Sigmoid colon (tissue), 7 donors: ENCODE measurements at regions of chr13 and their contacts with region 1.

Region 1: DNA sequence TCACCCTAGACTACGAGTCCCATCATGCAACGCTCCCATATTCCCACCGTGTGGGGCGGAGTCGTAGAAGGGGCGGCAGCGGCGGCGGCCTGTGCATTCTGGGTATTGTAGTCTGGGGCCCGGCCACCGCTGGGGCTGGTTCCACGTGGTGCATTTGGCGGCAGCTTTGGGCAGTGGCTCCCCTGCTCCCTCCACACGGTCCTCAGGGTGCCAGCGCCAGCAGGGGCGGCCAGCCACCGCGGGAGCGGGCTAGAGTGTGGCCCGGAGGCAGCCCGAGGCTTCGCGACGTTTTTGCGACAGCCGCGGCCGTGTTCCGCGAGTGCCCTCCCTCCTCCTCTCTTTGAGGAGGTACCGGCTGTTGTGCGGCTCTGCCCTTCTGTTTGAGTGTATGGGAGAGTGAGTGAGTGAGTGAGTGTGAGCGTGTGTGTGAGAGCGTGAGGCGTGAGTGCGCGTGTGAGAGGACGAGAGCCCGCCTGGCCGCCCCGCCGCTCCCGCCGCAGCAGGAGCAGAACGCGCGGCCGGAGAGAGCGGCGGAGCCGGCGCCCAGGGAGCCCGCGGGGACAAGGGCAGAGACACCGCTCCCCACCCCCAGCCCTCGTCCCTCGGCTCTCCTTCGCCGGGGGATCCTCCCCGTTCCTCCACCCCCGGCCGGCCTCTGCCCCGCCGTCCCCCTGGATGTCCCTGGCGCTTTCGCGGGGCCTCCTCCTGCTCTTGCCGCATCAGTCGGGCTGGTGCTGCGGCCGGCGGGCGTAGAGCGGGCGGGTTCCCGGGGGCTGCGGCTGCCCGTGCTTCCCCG is at the start of gene CDK8:
- DNase-seq: peak; percentile 93
- H3K4me3 ChIP-seq: peak within 1 kb of the TSS; percentile 86 to 97 (median 94)
- H3K27ac ChIP-seq: peak within 1 kb of the TSS; percentile 93 to 98 (median 95)
- H3K4me1 ChIP-seq: peaks cover 0 to 35% (median 17%) of the 10 kb centered on the region in 4 donors
- H3K27me3 ChIP-seq: no peaks in the 10 kb centered on the region
- CTCF ChIP-seq: no peak
- EP300 ChIP-seq: no peak
- POLR2A ChIP-seq: peak; percentile 77
- total RNA-seq, gene CDK8: 42.3 to 78.6 (median 46.6) TPM

Region 2: GRCh38 chr13:25114220-25114619 is 1139.8 kb before region 1 on chr13:
- intact Hi-C with region 1: no loop called
- DNase-seq: peak; percentile 75
- H3K4me3 ChIP-seq: no peak overlapping the region
- H3K27ac ChIP-seq: no peak overlapping the region
- H3K4me1 ChIP-seq: no peaks in the 10 kb centered on the region
- H3K27me3 ChIP-seq: peaks cover 0 to 4% (median 0%) of the 10 kb centered on the region in 3 donors
- CTCF ChIP-seq: peak in 3 of 4 experiments; percentile 42 to 69 (median 50)
- EP300 ChIP-seq: no peak
- POLR2A ChIP-seq: no peak

Region 3: DNA sequence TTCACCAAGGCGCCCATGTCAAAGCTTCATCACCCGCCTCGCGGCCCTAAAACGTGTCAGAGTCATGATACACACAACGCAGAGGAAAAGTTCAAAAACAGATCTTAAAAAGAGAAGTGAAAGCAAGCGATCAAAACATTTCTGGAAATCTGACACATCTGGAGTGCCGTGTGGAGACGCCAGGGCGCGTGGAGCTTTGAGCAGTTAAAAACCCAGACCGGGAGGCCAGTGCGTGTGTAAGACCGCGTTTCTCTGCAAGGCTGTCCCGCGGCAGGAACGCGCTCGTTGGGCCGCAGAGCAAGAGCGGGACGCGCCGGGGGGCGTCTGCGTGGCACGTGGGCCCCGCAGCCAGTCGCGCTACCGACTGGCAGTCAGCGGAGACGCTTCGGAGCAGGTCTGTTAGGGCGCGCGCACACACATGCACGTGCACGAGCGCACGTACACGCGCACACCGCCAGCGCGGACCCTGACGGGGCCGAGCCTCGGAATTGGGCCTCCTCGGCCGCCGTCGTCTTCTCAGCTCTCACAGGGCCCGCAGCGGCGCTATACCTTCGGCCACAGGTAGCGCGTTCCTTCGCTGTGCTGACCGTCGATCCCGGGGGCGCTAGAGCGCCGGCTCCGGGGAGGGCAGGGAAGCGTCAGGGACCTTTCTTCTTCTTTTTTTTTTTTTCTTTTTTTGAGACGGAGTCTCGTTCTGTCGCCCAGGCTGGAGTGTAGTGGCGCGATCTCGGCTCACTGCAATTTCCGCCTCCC is 67.7 kb before region 1 on chr13:
- intact Hi-C with region 1: loop called (anchors 5 kb)
- DNase-seq: peak; percentile 92
- H3K4me3 ChIP-seq: peak overlapping the region; percentile 43 to 76 (median 60)
- H3K27ac ChIP-seq: peak overlapping the region; percentile 77 to 87 (median 78)
- H3K4me1 ChIP-seq: peaks cover 0 to 11% (median 8%) of the 10 kb centered on the region in 4 donors
- H3K27me3 ChIP-seq: no peaks in the 10 kb centered on the region
- CTCF ChIP-seq: peak in 2 of 4 experiments; percentile 9 to 27
- EP300 ChIP-seq: no peak
- POLR2A ChIP-seq: no peak

Region 4: DNA sequence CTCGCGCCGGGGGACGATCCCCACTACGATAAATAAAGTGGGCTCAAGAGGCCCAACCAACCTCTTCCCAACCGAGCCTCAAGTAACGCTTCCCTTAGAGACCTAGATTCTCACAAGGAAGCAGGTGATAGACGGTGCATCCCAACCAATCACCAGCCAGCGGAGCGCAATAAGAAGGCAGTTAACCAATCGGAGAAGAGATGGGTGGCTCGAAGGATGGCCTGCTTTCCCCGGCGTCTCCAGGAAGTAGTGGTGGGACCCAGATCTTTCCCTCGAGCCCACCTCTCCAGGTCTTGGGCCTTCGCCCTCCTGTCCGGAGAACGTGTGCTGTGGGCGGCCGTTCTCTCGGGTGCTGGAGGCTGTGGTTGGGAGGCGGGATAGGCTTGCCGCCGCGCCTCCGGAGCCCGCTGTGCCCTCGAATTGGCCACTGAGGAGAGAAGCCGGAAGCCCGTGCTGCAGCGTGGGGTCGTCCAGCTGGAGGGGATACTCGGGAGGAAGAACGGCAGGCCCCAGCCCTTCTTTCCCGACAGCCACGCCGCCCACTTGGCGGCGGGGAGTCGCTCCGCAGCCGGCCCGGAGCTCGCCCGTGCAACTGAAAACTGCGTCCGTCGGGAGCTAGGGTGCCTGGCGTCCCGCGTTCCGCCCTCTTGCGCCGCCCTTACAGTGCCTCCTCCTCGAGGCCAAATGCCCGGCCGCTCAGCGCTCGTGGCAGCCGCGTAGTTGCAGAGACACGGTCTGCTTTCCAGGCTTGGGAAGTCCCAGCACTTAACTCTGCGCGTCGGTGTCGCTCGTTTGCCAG is 32.1 kb before region 1 on chr13 and contains the start of gene RNF6:
- intact Hi-C with region 1: loop called (anchors 2 kb)
- DNase-seq: peak; percentile 98
- H3K4me3 ChIP-seq: peak within 1 kb of the TSS; percentile 79 to 96 (median 92)
- H3K27ac ChIP-seq: peak within 1 kb of the TSS; percentile 95 to 98 (median 96)
- H3K4me1 ChIP-seq: peaks cover 0 to 26% (median 21%) of the 10 kb centered on the region in 4 donors
- H3K27me3 ChIP-seq: no peaks in the 10 kb centered on the region
- CTCF ChIP-seq: peak in 1 of 4 experiments; percentile 35
- EP300 ChIP-seq: no peak
- POLR2A ChIP-seq: peak in 1 of 2 donors; percentile 29
- total RNA-seq, gene RNF6: 11.9 to 27.1 (median 22.5) TPM

Region 5: GRCh38 chr13:26325876-26326275 is 71.9 kb after region 1 on chr13:
- intact Hi-C with region 1: loop called (anchors 5 kb)
- DNase-seq: no peak
- H3K4me3 ChIP-seq: no peak overlapping the region
- H3K27ac ChIP-seq: peak overlapping the region in 3 of 4 donors; percentile 47 to 76 (median 69)
- H3K4me1 ChIP-seq: peaks cover 0 to 70% (median 42%) of the 10 kb centered on the region in 4 donors
- H3K27me3 ChIP-seq: no peaks in the 10 kb centered on the region
- CTCF ChIP-seq: no peak
- EP300 ChIP-seq: no peak
- POLR2A ChIP-seq: no peak

Region 6: DNA sequence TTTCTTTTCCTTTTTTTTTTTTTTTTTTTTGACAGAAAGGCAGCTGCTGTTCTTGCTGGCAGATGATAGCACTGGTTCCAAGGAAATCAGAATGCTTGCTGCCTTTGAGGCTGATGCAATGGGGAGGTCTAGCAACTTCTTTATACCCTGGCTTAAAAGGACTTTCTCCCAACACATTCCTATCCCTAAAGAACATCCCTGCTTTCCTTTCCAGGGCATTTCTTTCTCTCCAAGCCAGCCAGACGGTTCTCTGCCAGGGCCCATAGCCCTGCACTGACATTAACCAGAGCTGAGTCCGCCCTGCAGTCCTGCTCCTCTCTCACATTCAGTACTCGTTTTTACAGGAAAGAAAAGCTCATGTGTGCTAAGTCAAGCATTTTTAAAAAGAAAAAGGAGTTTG is 169.6 kb after region 1 on chr13:
- intact Hi-C with region 1: loop called (anchors 1 kb)
- DNase-seq: peak; percentile 92
- H3K4me3 ChIP-seq: peak overlapping the region in 3 of 4 donors; percentile 3 to 20 (median 3)
- H3K27ac ChIP-seq: peak overlapping the region; percentile 85 to 92 (median 88)
- H3K4me1 ChIP-seq: peaks cover 0 to 77% (median 62%) of the 10 kb centered on the region in 4 donors
- H3K27me3 ChIP-seq: no peaks in the 10 kb centered on the region
- CTCF ChIP-seq: no peak
- EP300 ChIP-seq: peak; percentile 43 to 90 (median 66)
- POLR2A ChIP-seq: no peak

Region 7: GRCh38 chr13:26442541-26442940 is 188.6 kb after region 1 on chr13:
- intact Hi-C with region 1: loop called (anchors 5 kb)
- DNase-seq: no peak
- H3K4me3 ChIP-seq: no peak overlapping the region
- H3K27ac ChIP-seq: peak overlapping the region; percentile 69 to 87 (median 81)
- H3K4me1 ChIP-seq: peaks cover 0 to 42% (median 32%) of the 10 kb centered on the region in 4 donors
- H3K27me3 ChIP-seq: no peaks in the 10 kb centered on the region
- CTCF ChIP-seq: no peak
- EP300 ChIP-seq: peak in 1 of 4 donors; percentile 20
- POLR2A ChIP-seq: no peak

Region 8: DNA sequence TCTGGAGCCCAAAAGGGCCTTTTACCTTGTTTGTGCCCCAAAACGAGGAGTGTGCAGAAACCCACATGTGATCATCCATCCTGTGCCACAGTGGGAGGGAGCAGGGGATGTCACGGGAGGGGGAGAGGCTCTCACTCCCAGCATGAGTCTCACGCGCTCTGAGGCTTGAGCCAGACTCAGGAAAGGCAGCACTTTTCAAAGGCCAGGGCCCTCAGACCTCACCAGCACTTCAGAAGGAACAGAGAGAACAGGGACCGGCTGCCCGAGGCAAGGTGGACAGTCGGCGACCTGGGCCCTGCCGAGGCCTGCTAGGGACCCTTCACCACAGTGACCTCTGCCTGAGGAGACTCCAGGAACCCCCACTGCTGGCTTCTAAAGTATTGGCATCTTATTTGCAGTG is 231.8 kb after region 1 on chr13:
- intact Hi-C with region 1: loop called (anchors 5 kb)
- DNase-seq: peak; percentile 80
- H3K4me3 ChIP-seq: no peak overlapping the region
- H3K27ac ChIP-seq: peak overlapping the region; percentile 46 to 84 (median 74)
- H3K4me1 ChIP-seq: peaks cover 0 to 32% (median 26%) of the 10 kb centered on the region in 4 donors
- H3K27me3 ChIP-seq: no peaks in the 10 kb centered on the region
- CTCF ChIP-seq: no peak
- EP300 ChIP-seq: no peak
- POLR2A ChIP-seq: no peak

Region 9: DNA sequence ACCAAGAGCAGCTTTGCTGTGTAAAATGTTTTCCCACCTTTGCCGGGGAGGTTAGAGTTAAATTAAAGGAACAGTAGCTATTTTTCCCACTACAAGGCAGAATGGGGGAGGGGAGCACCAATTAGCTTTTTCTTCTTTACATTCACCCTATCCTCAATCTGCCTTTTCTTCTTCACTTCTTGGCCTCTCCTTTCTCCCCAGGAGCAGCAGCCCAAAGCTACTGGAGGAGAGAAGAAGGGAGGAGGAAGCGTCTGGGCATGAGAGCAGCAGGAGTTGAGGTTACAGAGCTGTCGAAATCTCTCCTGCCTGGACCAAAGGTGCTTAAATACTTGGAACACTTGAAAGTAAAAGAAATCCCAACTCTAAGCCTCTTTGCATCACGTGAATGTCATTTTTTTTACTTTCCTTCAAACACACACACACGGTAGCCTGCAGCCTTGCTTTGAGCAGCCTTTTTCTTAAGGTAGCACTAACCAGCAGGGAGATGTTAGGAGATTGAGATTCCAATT is 264.5 kb after region 1 on chr13:
- intact Hi-C with region 1: no loop called
- DNase-seq: no peak
- H3K4me3 ChIP-seq: no peak overlapping the region
- H3K27ac ChIP-seq: no peak overlapping the region
- H3K4me1 ChIP-seq: no peaks in the 10 kb centered on the region
- H3K27me3 ChIP-seq: no peaks in the 10 kb centered on the region
- CTCF ChIP-seq: no peak
- EP300 ChIP-seq: no peak
- POLR2A ChIP-seq: no peak

Region 10: DNA sequence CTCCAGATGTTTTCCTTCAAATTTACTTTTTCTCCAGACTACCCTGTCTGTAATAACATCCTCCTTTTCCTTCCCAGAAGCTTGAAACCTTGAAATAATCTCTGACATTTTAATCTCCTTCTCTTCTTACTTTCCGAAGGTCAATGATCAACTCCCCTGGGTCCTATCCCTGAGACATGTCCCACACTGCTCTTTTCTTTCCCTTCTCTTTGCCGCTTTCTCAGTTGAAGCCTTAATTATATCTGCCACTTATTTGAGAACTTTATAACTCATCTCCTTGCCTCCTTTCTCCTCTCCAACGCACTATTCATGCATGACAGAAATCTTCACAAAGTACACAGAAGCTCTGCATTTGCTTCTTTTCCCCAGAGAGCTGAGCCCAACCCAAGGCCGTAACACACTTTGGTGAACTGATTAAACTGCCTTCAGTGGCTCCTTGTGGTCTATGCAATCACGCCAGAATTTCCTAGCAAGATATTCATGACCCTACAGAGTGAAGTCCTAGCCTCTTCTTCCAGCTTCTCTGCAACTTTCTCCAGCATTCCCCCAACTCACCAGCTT is 294.3 kb after region 1 on chr13:
- intact Hi-C with region 1: no loop called
- DNase-seq: no peak
- H3K4me3 ChIP-seq: no peak overlapping the region
- H3K27ac ChIP-seq: no peak overlapping the region
- H3K4me1 ChIP-seq: no peaks in the 10 kb centered on the region
- H3K27me3 ChIP-seq: peaks cover 0 to 15% (median 8%) of the 10 kb centered on the region in 3 donors
- CTCF ChIP-seq: no peak
- EP300 ChIP-seq: no peak
- POLR2A ChIP-seq: no peak